ENCODE measurements at regions of chr3 and their contacts with region 1.

Region 1: DNA sequence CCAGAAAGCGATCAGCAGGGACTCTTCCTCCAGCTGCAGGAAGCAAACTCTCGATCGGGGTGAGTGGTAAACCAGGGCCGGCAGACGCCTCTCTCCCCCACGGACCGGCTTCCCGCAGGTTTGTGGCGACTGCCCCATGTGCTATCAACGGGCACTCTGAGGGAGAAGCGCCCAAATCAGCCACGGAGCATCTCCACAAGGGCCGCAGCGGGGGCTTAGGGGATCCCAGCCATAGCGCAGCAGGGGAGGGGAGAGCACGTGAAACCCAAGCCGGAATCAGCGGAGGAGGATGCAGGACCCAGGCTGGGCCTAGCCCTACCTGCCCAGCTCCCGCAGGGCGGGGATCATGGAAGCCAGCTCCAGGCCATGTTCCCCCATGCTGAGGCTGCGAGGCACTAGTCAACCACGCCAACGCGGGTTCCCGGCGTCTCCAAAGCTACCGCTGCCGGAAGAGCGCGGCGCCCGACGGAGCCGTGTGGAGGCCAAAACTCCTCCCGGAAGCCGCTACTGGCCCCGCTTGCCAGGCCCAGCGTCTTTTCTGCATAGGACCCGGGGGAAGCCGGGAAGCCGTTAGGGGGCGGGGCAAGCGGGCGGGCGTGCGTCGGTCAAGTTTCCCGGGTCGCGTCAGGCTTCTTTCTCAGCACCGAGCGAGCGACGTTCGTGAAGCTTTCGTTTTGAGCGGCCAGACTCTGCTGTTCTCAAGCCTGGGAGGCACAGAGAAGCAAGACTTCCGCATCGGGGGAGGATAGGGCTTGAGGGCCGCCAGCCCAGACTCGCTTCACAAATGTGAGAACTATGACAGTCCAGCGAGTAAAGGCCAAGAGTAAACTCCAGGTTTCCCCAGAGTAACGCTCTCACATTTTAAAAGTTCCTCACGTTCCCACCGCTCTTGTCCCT is at the start of gene ATR:
- DNase-seq: peak; percentile 98
- H3K4me3 ChIP-seq: peak within 1 kb of the TSS; percentile 56 to 83 (median 74)
- H3K27ac ChIP-seq: peak within 1 kb of the TSS; percentile 89 to 92 (median 91)
- H3K4me1 ChIP-seq: peaks cover 0 to 35% (median 19%) of the 10 kb centered on the region in 4 donors
- H3K27me3 ChIP-seq: no peaks in the 10 kb centered on the region
- CTCF ChIP-seq: no peak
- EP300 ChIP-seq: peak in 2 of 4 donors; percentile 16 to 61
- POLR2A ChIP-seq: peak; percentile 62 to 68
- total RNA-seq, gene ATR: 15.2 to 26.1 (median 19.8) TPM

Region 2: DNA sequence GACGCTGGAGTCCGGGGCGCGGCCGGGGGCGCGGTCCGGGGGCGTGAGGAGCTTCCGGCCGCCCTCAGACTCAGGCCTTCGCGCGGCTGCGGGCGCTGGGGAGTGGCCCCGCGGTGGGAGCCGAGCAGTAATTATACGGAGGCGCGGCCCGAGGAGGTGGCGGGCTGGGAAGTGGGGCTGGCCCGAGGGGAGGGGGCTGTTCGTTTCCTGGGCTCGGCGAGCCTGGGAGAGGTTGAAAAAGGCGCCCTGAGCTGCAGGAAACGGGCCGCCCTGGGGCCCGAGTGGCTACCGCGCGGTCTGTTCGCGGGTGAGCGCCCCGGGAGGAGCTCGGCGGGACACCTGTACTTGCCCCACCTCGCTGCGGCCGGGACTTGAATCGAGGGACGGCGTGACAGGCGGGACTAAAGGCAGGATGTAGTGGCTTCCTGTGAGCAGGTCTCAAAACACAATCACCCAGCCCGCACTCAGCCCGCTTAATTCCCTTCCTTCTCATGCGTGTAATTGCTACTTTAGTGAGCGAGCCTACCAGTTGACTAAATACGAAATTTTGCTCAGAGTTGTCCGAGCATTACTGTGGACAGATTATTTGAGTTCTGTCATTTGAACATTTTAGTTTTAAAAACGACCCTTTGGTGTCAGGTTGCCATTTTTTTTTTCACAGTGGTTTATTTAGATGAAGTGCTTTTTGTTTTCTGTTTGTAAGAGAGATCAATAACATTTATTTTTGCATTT is 1090.9 kb before region 1 on chr3:
- intact Hi-C with region 1: no loop called
- DNase-seq: peak; percentile 85
- H3K4me3 ChIP-seq: peak overlapping the region; percentile 60 to 97 (median 91)
- H3K27ac ChIP-seq: peak overlapping the region; percentile 92 to 98 (median 96)
- H3K4me1 ChIP-seq: peaks cover 0 to 24% (median 11%) of the 10 kb centered on the region in 4 donors
- H3K27me3 ChIP-seq: no peaks in the 10 kb centered on the region
- CTCF ChIP-seq: peak in 1 of 4 experiments; percentile 9
- EP300 ChIP-seq: no peak
- POLR2A ChIP-seq: peak in 1 of 2 donors; percentile 39

Region 3: GRCh38 chr3:142595951-142596725 is 17.6 kb after region 1 on chr3 and contains the start of gene PLS1:
- intact Hi-C with region 1: loop called (anchors 1 kb)
- DNase-seq: peak; percentile 92
- H3K4me3 ChIP-seq: peak within 1 kb of the TSS; percentile 44 to 64 (median 60)
- H3K27ac ChIP-seq: peak within 1 kb of the TSS; percentile 26 to 73 (median 36)
- H3K4me1 ChIP-seq: peaks cover 0 to 13% (median 9%) of the 10 kb centered on the region in 4 donors
- H3K27me3 ChIP-seq: no peaks in the 10 kb centered on the region
- CTCF ChIP-seq: no peak
- EP300 ChIP-seq: peak in 1 of 4 donors; percentile 18
- POLR2A ChIP-seq: peak in 1 of 2 donors; percentile 68
- total RNA-seq, gene PLS1: 0.55 to 1.8 (median 0.92) TPM

Region 4: GRCh38 chr3:142723968-142724681 is 145.6 kb after region 1 on chr3 and contains the start of gene TRPC1:
- intact Hi-C with region 1: loop called (anchors 2 kb)
- DNase-seq: peak; percentile 88
- H3K4me3 ChIP-seq: peak within 1 kb of the TSS; percentile 81 to 99 (median 84)
- H3K27ac ChIP-seq: peak within 1 kb of the TSS; percentile 91 to 95 (median 92)
- H3K4me1 ChIP-seq: peaks cover 0 to 18% (median 5%) of the 10 kb centered on the region in 4 donors
- H3K27me3 ChIP-seq: no peaks in the 10 kb centered on the region
- CTCF ChIP-seq: no peak
- EP300 ChIP-seq: no peak
- POLR2A ChIP-seq: peak in 1 of 2 donors; percentile 47
- total RNA-seq, gene TRPC1: 21.4 to 31.0 (median 25.5) TPM

Region 5: DNA sequence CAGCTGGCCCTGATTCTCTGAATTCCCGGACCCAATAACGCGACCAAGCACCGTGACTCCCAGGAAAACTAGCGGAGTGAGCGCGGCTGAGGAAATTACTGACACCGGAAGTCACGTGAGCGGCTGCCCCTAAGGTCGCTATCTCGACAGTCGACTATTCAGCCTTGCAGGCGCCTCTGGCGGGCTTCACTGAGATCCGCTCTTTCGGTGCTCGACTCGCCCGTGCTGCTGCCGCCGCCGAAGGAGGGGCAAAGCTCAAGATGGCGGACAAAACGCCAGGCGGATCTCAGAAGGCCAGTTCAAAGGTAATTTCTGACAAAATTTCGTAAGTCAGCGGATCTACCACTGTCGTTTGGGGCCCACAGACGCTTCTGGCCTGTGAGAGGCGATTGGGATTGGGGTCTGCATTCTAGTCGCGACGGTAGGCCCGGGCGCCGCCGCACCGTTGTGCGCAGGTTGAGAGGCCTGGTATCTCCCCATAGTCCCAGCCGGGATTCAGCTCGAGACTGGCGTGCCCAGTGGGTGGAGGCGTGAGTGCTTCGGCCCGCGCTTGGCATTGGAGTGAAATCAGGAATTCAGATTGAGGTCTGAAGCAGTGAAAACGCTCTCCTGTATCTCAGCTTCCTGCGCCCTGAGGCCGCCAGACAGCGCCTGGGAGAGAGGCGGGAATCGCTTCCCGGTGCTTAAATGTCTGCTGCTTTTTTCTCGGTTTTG is 423.0 kb after region 1 on chr3 and contains the start of gene U2SURP:
- intact Hi-C with region 1: loop called (anchors 5 kb)
- DNase-seq: peak; percentile 98
- H3K4me3 ChIP-seq: peak within 1 kb of the TSS; percentile 64 to 95 (median 94)
- H3K27ac ChIP-seq: peak within 1 kb of the TSS; percentile 91 to 95 (median 92)
- H3K4me1 ChIP-seq: peaks cover 0 to 49% (median 35%) of the 10 kb centered on the region in 4 donors
- H3K27me3 ChIP-seq: no peaks in the 10 kb centered on the region
- CTCF ChIP-seq: no peak
- EP300 ChIP-seq: peak in 2 of 4 donors; percentile 13 to 78
- POLR2A ChIP-seq: peak in 1 of 2 donors; percentile 26
- total RNA-seq, gene U2SURP: 66.8 to 79.8 (median 68.0) TPM

Measured in sigmoid colon (tissue), 7 donors.